Ascending aorta (tissue), 2 donors: ENCODE measurements at regions of chr3 and their contacts with region 1.

Region 1: DNA sequence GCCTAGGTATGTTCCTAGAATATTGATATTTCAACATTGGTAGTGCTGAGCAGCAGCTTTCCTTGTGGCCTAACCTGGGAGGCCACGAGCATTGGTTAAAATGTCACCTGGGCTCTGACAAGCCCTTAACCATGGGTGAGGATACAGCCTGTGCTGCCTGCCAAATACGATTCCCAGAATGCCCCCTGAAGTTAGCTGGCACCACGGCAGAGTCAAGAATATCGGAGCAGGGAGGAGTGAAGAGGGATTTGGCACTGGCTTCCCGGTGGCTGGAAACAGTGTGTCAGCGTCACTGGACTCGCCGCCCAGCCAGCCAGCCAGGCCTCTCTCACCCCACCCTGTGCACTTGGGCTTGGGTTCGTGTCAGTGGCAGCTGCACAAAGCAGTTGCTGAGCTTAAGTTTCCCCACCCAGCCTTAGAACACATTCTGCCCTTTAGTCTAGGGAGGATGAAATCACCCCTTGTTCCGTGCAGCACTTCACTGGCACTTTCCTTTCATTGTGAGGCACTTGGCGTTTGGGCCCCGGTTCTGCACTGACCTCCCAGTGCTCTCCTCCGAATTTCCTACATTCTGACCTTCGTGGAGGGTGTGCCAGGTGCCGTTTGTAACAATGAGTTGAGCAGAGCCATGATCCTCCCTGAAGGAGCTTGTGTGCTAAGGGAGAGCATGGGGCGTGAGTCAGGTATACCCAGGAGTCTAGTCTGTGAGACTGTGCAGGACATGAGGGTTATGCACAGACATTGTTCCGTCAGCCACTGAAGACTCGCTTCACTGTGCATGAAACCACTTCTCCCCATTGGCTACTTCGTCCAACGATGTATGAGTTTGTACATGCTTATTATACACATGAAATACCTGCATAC is 152.8 kb upstream of the BHLHE40 start:
- DNase-seq: peak; percentile 68 to 91
- H3K4me3 ChIP-seq: no peak overlapping the region
- H3K27ac ChIP-seq: peak overlapping the region; percentile 74 to 81
- H3K4me1 ChIP-seq: peaks cover 8 to 35% of the 10 kb centered on the region in 2 donors
- H3K27me3 ChIP-seq: no peaks in the 10 kb centered on the region
- CTCF ChIP-seq: no peak

Region 2: GRCh38 chr3:4629095-4630007 is 197.1 kb before region 1 on chr3:
- intact Hi-C with region 1: no loop called
- DNase-seq: no peak
- H3K4me3 ChIP-seq: no peak overlapping the region
- H3K27ac ChIP-seq: no peak overlapping the region
- H3K4me1 ChIP-seq: no peaks in the 10 kb centered on the region
- H3K27me3 ChIP-seq: no peaks in the 10 kb centered on the region
- CTCF ChIP-seq: no peak

Region 3: GRCh38 chr3:4722103-4722502 is 104.4 kb before region 1 on chr3:
- intact Hi-C with region 1: loop called (anchors 5 kb)
- DNase-seq: no peak
- H3K4me3 ChIP-seq: no peak overlapping the region
- H3K27ac ChIP-seq: peak overlapping the region; percentile 28 to 60
- H3K4me1 ChIP-seq: peaks cover 0 to 19% of the 10 kb centered on the region in 2 donors
- H3K27me3 ChIP-seq: no peaks in the 10 kb centered on the region
- CTCF ChIP-seq: peak in 2 of 3 experiments; percentile 13 to 43

Region 4: GRCh38 chr3:4898454-4899313 is 72.2 kb after region 1 on chr3:
- intact Hi-C with region 1: loop called (anchors 2 kb)
- DNase-seq: no peak
- H3K4me3 ChIP-seq: peak overlapping the region in 1 of 2 donors; percentile 25
- H3K27ac ChIP-seq: peak overlapping the region; percentile 75 to 85
- H3K4me1 ChIP-seq: peaks cover 0 to 16% of the 10 kb centered on the region in 2 donors
- H3K27me3 ChIP-seq: no peaks in the 10 kb centered on the region
- CTCF ChIP-seq: no peak